Activated B cell treated with CpG ODN at 0.5 μM for 24 hours (primary cell): ENCODE measurements at regions of chr2 and their contacts with region 1.

Region 1: GRCh38 chr2:118046634-118047210 is 32.9 kb upstream of the CCDC93 start:
- DNase-seq: no peak
- ATAC-seq: peak; percentile 25
- H3K4me3 Mint-ChIP-seq: no peak overlapping the region
- H3K27ac Mint-ChIP-seq: no peak overlapping the region
- H3K4me1 Mint-ChIP-seq: peaks cover 10% of the 10 kb centered on the region
- H3K27me3 Mint-ChIP-seq: peaks cover 27% of the 10 kb centered on the region
- CTCF ChIP-seq: no peak

Region 2: DNA sequence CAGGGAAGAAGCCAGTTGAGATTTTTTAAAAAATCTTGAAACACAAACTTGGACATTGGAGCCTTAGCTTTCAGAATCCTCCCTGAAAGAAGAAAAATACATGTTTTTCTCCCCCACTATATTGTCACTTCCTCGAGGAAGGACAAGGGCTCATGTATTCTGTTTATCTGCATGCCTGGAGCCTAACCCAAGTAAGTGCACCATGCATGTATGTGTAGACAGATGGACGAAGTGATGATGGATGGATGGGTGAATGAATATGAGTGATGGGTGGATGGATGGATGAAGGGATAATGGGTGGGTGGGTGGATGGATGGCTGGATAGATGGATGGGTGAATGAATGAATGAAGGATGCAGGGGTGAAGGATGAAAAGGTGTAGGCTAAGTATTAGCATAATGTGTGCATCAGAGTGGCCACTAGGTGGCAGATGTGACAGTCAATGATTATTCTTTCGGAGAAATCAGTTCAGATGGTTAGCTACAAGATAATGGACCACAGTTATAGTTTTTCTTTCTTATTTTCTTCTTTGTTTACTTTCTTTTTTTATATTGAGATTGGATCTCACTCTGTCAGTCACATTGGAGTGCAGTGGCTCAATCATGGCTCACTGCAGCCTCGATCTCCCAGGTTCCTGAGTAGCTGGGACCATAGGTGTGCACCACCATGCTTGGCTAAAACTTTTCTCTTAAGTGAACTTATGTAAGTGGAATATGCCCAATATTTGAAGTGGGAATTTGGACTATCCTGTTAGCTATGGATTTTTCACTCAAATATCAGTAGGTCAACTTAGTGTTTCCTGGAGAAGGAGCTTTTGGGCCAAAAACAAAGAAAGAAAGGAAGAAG is 14.3 kb before region 1 on chr2:
- CTCF ChIA-PET with region 1: interaction called, 28 read pairs
- POLR2A ChIA-PET with region 1: no interaction called
- intact Hi-C with region 1: loop called (anchors 1 kb)
- DNase-seq: no peak
- ATAC-seq: peak; percentile 77
- H3K4me3 Mint-ChIP-seq: no peak overlapping the region
- H3K27ac Mint-ChIP-seq: no peak overlapping the region
- H3K4me1 Mint-ChIP-seq: peaks cover 14% of the 10 kb centered on the region
- H3K27me3 Mint-ChIP-seq: peaks cover 24% of the 10 kb centered on the region
- CTCF ChIP-seq: peak; percentile 24

Region 3: GRCh38 chr2:118061135-118061955 is 14.6 kb after region 1 on chr2:
- CTCF ChIA-PET with region 1: interaction called, 342 read pairs
- POLR2A ChIA-PET with region 1: interaction called, 18 read pairs
- intact Hi-C with region 1: loop called (anchors 1 kb)
- DNase-seq: no peak
- ATAC-seq: peak; percentile 82
- H3K4me3 Mint-ChIP-seq: no peak overlapping the region
- H3K27ac Mint-ChIP-seq: no peak overlapping the region
- H3K4me1 Mint-ChIP-seq: peaks cover 47% of the 10 kb centered on the region
- H3K27me3 Mint-ChIP-seq: peaks cover 8% of the 10 kb centered on the region
- CTCF ChIP-seq: no peak

Region 4: GRCh38 chr2:118103951-118104940 is 57.5 kb after region 1 on chr2:
- CTCF ChIA-PET with region 1: interaction called, 3 read pairs
- POLR2A ChIA-PET with region 1: interaction called, 13 read pairs
- intact Hi-C with region 1: no loop called
- DNase-seq: no peak
- ATAC-seq: peak; percentile 60
- H3K4me3 Mint-ChIP-seq: no peak overlapping the region
- H3K27ac Mint-ChIP-seq: peak overlapping the region; percentile 61
- H3K4me1 Mint-ChIP-seq: peaks cover 13% of the 10 kb centered on the region
- H3K27me3 Mint-ChIP-seq: no peaks in the 10 kb centered on the region
- CTCF ChIP-seq: no peak

Region 5: GRCh38 chr2:118855451-118856279 is 808.9 kb after region 1 on chr2:
- CTCF ChIA-PET with region 1: interaction called, 23 read pairs
- POLR2A ChIA-PET with region 1: no interaction called
- intact Hi-C with region 1: loop called (anchors 1 kb)
- DNase-seq: peak; percentile 77
- ATAC-seq: peak; percentile 90
- H3K4me3 Mint-ChIP-seq: peak overlapping the region; percentile 61
- H3K27ac Mint-ChIP-seq: peak overlapping the region; percentile 30
- H3K4me1 Mint-ChIP-seq: peaks cover 23% of the 10 kb centered on the region
- H3K27me3 Mint-ChIP-seq: peaks cover 65% of the 10 kb centered on the region
- CTCF ChIP-seq: peak; percentile 90

Region 6: GRCh38 chr2:118865106-118865505 is 818.4 kb after region 1 on chr2:
- CTCF ChIA-PET with region 1: interaction called, 4 read pairs
- POLR2A ChIA-PET with region 1: no interaction called
- intact Hi-C with region 1: loop called (anchors 1 kb)
- DNase-seq: no peak
- ATAC-seq: peak; percentile 77
- H3K4me3 Mint-ChIP-seq: no peak overlapping the region
- H3K27ac Mint-ChIP-seq: no peak overlapping the region
- H3K4me1 Mint-ChIP-seq: no peaks in the 10 kb centered on the region
- H3K27me3 Mint-ChIP-seq: peaks cover 34% of the 10 kb centered on the region
- CTCF ChIP-seq: no peak

Region 7: GRCh38 chr2:119264781-119265692 is 1218.3 kb after region 1 on chr2:
- CTCF ChIA-PET with region 1: interaction called, 3 read pairs
- POLR2A ChIA-PET with region 1: no interaction called
- intact Hi-C with region 1: loop called (anchors 10 kb)
- DNase-seq: no peak
- ATAC-seq: peak; percentile 56
- H3K4me3 Mint-ChIP-seq: no peak overlapping the region
- H3K27ac Mint-ChIP-seq: no peak overlapping the region
- H3K4me1 Mint-ChIP-seq: no peaks in the 10 kb centered on the region
- H3K27me3 Mint-ChIP-seq: peaks cover 2% of the 10 kb centered on the region
- CTCF ChIP-seq: no peak